H1 (cell line): ENCODE measurements at regions of chr11 and their contacts with region 1.

Region 1: DNA sequence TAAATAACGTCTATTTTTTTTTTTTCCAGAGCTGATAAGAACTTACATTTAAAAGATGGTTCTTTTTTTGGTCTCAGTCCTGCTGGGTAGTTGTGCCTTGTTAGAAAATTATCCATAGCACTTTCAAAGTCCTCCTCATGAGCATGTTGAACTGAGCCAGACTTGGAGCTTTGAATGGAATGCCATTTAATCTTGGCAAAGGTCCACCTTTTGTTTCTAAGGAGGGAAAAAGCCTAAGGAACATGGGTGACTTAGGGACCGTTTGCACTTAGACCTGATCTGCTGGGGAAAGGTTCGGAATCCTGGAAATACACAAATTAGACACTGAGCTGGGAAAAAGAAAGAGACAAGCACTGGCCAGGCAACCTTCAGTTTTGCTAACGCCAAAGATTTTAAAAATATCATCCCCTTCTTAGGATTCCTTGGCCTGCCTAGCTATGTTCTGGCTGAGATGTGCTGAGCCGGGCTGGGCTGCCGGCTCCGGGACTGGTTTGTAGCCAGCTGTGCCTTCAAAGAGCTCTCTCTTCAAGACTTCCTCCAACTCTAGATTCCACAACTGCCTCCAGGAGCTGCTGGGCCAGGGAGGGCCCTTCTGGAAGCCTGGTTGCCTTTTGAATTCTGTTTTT is 67.4 kb downstream of the ENDOD1 start:
- DNase-seq: no peak
- H3K4me3 ChIP-seq: no peak overlapping the region
- H3K27ac ChIP-seq: no peak overlapping the region
- H3K4me1 ChIP-seq: no peaks in the 10 kb centered on the region
- H3K27me3 ChIP-seq: no peaks in the 10 kb centered on the region
- CTCF ChIP-seq: no peak
- EP300 ChIP-seq: no peak
- POLR2A ChIP-seq: no peak
- RAD21 ChIP-seq: no peak

Region 2: GRCh38 chr11:94885133-94885532 is 271.9 kb before region 1 on chr11:
- CTCF ChIA-PET with region 1: no interaction called
- POLR2A ChIA-PET with region 1: no interaction called
- DNase-seq: no peak
- H3K4me3 ChIP-seq: no peak overlapping the region
- H3K27ac ChIP-seq: no peak overlapping the region
- H3K4me1 ChIP-seq: peaks cover 0 to 3% (median 0%) of the 10 kb centered on the region in 4 experiments; a peak in 1 of 7 replicates
- H3K27me3 ChIP-seq: no peaks in the 10 kb centered on the region
- CTCF ChIP-seq: no peak
- EP300 ChIP-seq: no peak
- POLR2A ChIP-seq: no peak
- RAD21 ChIP-seq: no peak

Region 3: DNA sequence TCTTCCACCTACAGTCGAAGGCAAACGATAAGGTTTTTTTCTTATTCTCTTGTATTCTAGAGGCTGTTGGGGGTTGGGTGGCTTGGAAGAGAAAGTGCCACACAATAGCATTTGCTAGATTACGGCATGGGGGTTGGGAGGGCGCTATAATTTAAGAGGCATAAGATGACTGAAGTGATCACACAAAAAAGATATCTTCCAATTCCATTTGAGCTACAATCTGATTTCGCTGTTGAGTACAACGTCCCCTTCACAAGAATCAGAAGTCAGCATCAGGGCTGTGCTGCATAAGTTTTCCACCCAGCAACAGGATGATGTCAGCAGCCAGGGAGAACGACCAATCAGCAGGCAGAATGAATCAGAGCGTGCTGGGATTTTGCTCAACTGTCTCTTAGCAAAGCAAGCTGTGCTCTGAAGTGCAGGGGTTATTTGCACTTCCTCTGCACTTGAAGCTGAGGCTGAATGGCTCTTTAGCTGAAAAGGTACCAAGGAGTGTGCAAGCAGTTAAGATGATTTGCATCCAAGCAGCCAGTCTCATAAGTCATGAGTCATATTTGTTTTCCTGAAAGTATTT is 97.2 kb after region 1 on chr11:
- CTCF ChIA-PET with region 1: interaction called, 12 read pairs
- POLR2A ChIA-PET with region 1: no interaction called
- DNase-seq: peak in 1 of 2 experiments; percentile 66
- H3K4me3 ChIP-seq: no peak overlapping the region
- H3K27ac ChIP-seq: peak overlapping the region; percentile 49
- H3K4me1 ChIP-seq: peaks cover 15 to 36% (median 22%) of the 10 kb centered on the region in 4 experiments; a peak in 6 of 7 replicates
- H3K27me3 ChIP-seq: no peaks in the 10 kb centered on the region
- CTCF ChIP-seq: no peak
- EP300 ChIP-seq: no peak
- POLR2A ChIP-seq: 0 out of 3 replicates have a peak, but pooled peaks of 1 of the 2 experiments have one; percentile 48
- RAD21 ChIP-seq: no peak

Region 4: GRCh38 chr11:95358511-95359340 is 201.7 kb after region 1 on chr11:
- CTCF ChIA-PET with region 1: interaction called, 16 read pairs
- POLR2A ChIA-PET with region 1: no interaction called
- DNase-seq: no peak
- H3K4me3 ChIP-seq: no peak overlapping the region
- H3K27ac ChIP-seq: no peak overlapping the region
- H3K4me1 ChIP-seq: peaks cover 9 to 14% (median 12%) of the 10 kb centered on the region in 4 experiments; a peak in 6 of 7 replicates
- H3K27me3 ChIP-seq: no peaks in the 10 kb centered on the region
- CTCF ChIP-seq: no peak
- EP300 ChIP-seq: no peak
- POLR2A ChIP-seq: no peak
- RAD21 ChIP-seq: no peak

Region 5: DNA sequence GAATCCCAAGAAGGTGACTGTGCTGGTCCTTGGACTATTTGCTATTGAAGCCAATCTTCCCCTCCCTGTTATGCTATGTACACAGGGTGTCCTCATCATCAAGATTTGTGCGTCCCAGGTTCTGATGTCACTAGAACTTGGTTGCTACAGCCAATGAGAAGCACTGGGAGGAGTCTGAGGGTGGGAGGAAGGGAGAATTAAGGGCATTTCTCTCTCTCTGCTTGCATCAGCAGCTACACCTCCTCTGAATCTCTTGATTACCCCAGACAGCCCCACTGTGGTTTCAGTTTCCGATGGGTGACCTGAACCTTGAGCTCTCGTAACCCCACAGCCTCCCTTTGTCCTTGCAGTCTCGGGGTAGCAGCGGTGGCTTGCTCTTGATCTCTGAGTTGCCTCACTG is 286.4 kb after region 1 on chr11:
- CTCF ChIA-PET with region 1: interaction called, 11 read pairs
- POLR2A ChIA-PET with region 1: no interaction called
- DNase-seq: no peak
- H3K4me3 ChIP-seq: no peak overlapping the region
- H3K27ac ChIP-seq: no peak overlapping the region
- H3K4me1 ChIP-seq: peaks cover 0 to 6% (median 3%) of the 10 kb centered on the region in 4 experiments; a peak in 4 of 7 replicates
- H3K27me3 ChIP-seq: no peaks in the 10 kb centered on the region
- CTCF ChIP-seq: no peak
- EP300 ChIP-seq: no peak
- POLR2A ChIP-seq: no peak
- RAD21 ChIP-seq: no peak